ENCODE measurements at regions of chr1 and their contacts with region 1.

Region 1: DNA sequence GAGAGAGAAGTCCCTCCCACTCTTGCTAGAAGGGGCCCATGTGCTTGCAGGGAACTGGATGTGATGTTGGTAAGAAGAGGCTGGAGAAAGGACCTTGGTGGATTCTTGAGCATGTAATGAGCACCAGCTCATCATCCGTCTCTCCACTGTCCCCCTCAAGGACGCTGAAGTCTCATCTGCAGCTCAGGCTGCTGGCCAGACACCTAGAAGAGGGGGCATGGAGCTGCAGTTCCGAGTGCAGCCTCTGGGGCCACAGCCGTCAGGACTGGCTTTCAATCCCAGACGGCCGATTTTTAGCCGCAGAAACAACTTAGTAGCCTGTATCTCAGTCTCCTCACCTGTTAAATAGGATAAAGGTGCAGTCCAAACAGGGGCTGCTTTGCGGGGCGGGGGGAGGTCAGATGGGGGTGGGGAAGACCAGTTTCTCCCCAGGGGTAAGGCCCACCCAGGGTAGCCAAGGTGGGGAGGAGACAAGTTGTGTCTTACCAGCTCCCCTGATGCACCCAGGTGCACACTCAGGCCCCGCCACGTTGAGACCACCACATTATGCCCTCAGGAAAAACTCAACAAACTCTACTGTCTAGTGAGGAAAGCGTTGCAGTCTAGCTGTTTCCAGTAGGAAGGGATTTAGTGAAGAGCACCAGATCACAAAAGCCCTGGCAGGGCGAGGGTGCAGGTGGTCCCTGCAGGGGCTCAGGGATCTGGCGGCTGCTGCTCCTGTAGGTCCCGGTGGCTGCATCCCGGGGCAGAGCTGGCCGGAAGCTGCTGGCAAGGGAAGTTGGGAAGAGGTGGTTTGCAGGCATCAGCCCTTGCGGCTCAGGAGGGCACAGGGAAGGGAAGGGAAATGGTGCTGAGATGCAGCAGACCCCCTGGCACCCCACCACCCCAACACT is 29.5 kb downstream of the LDLRAP1 start:
- DNase-seq: peak in 7 of 9 donors; percentile 42 to 54 (median 49)
- ATAC-seq: peak; percentile 80
- H3K4me3 ChIP-seq: no peak overlapping the region
- H3K4me3 Mint-ChIP-seq: peak overlapping the region in 7 of 10 donors; percentile 7 to 43 (median 29)
- H3K27ac ChIP-seq: peak overlapping the region; percentile 24
- H3K27ac Mint-ChIP-seq: peak overlapping the region in 8 of 9 donors; percentile 71 to 92 (median 79)
- H3K4me1 ChIP-seq: peaks cover 8 to 28% of the 10 kb centered on the region in 2 donors
- H3K4me1 Mint-ChIP-seq: peaks cover 11 to 73% (median 58%) of the 10 kb centered on the region in 7 donors
- H3K27me3 ChIP-seq: no peaks in the 10 kb centered on the region
- H3K27me3 Mint-ChIP-seq: no peaks in the 10 kb centered on the region

Region 2: DNA sequence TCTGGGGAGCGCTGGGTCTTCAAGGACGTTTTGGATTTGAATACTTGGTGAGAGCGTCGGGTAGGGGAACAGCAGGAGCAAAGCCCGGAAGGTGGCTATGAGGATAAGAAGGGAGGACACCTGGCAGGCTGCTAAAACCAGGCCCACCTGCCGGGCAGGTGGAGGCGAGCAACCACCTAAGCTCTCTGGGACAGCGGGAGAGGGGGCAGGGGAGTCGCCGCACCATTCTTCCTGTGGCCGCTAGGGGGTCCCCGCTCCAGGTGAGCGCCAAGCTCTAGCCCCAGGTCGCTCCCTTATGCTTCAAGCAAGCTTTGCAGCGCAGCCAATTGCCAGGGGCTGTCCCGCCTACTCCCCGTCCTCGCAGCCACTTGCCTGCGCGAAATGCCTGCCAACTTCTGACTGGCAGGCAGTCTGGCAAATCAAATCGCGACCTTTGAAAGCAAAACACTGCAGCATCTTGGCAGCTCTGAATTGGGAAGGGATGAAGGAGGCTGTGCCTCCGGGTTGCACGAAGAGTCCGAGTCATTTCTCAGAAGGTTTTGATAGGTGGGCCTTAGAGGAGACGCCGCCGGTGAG is 1157.5 kb before region 1 on chr1 and contains the start of gene NIPAL3:
- CTCF ChIA-PET with region 1: no interaction called
- POLR2A ChIA-PET with region 1: no interaction called
- intact Hi-C with region 1: loop called in 1 of 2 experiments (anchors 10 kb)
- DNase-seq: peak; percentile 81 to 99 (median 97)
- ATAC-seq: peak; percentile 98
- H3K4me3 ChIP-seq: peak within 1 kb of the TSS; percentile 76
- H3K4me3 Mint-ChIP-seq: peak within 1 kb of the TSS; percentile 95 to 100 (median 98)
- H3K27ac ChIP-seq: peak within 1 kb of the TSS; percentile 74
- H3K27ac Mint-ChIP-seq: peak within 1 kb of the TSS; percentile 75 to 99 (median 90)
- H3K4me1 ChIP-seq: peaks cover 23 to 44% of the 10 kb centered on the region in 2 donors
- H3K4me1 Mint-ChIP-seq: peaks cover 51 to 91% (median 75%) of the 10 kb centered on the region in 7 donors
- H3K27me3 ChIP-seq: no peaks in the 10 kb centered on the region
- H3K27me3 Mint-ChIP-seq: no peaks in the 10 kb centered on the region
- total RNA-seq, gene NIPAL3: 35.5 to 65.0 (median 54.5) TPM

Region 3: DNA sequence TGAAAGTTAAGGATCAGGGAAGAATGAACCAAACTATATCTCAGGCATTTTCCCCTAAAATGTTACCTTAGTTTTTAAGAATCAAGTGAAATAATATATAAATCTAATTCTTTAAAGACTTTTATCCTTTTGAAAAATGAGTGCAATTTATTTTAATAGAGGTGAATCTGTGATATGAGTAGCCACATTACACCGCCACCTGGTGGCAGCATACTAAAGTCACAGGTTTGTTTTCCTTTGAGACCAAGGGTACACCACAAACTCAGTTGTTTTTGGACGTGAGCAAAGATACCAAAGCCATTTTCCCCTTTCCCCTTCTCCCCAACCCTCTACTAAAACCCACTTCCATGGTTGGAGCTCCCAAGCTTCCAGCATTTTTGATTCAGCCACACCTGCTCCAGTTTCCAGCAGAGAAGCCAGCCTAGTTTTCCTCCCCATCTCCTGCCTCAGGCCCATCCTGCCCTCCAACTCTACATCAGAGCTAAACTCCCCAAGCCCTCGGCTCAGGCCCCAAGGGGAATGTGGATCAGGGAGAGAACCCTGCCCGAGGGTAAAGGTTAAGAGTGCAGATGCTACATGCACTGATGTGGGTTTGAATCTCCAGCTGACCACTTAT is 52.4 kb before region 1 on chr1:
- CTCF ChIA-PET with region 1: interaction called, 8 read pairs
- POLR2A ChIA-PET with region 1: interaction called, 11 read pairs
- intact Hi-C with region 1: no loop called
- DNase-seq: peak; percentile 40 to 75 (median 66)
- ATAC-seq: peak; percentile 84
- H3K4me3 ChIP-seq: no peak overlapping the region
- H3K4me3 Mint-ChIP-seq: no peak overlapping the region
- H3K27ac ChIP-seq: no peak overlapping the region
- H3K27ac Mint-ChIP-seq: peak overlapping the region in 7 of 9 donors; percentile 72 to 94 (median 85)
- H3K4me1 ChIP-seq: peaks cover 0 to 5% of the 10 kb centered on the region in 2 donors
- H3K4me1 Mint-ChIP-seq: peaks cover 3 to 18% (median 11%) of the 10 kb centered on the region in 7 donors
- H3K27me3 ChIP-seq: no peaks in the 10 kb centered on the region
- H3K27me3 Mint-ChIP-seq: peaks cover 0 to 4% (median 0%) of the 10 kb centered on the region in 5 donors

Region 4: GRCh38 chr1:25543425-25544242 is 29.3 kb before region 1 on chr1 and contains the start of gene LDLRAP1:
- CTCF ChIA-PET with region 1: interaction called, 13 read pairs
- POLR2A ChIA-PET with region 1: interaction called, 442 read pairs
- intact Hi-C with region 1: no loop called
- DNase-seq: peak in 8 of 9 donors; percentile 28 to 81 (median 52)
- ATAC-seq: peak; percentile 97
- H3K4me3 ChIP-seq: peak within 1 kb of the TSS; percentile 60
- H3K4me3 Mint-ChIP-seq: peak within 1 kb of the TSS; percentile 82 to 98 (median 95)
- H3K27ac ChIP-seq: peak within 1 kb of the TSS; percentile 87
- H3K27ac Mint-ChIP-seq: peak within 1 kb of the TSS; percentile 34 to 97 (median 91)
- H3K4me1 ChIP-seq: peaks cover 35 to 38% of the 10 kb centered on the region in 2 donors
- H3K4me1 Mint-ChIP-seq: peaks cover 26 to 48% (median 39%) of the 10 kb centered on the region in 7 donors
- H3K27me3 ChIP-seq: no peaks in the 10 kb centered on the region
- H3K27me3 Mint-ChIP-seq: peaks cover 0 to 15% (median 0%) of the 10 kb centered on the region in 5 donors
- total RNA-seq, gene LDLRAP1: 28.1 to 364 (median 159) TPM

Region 5: DNA sequence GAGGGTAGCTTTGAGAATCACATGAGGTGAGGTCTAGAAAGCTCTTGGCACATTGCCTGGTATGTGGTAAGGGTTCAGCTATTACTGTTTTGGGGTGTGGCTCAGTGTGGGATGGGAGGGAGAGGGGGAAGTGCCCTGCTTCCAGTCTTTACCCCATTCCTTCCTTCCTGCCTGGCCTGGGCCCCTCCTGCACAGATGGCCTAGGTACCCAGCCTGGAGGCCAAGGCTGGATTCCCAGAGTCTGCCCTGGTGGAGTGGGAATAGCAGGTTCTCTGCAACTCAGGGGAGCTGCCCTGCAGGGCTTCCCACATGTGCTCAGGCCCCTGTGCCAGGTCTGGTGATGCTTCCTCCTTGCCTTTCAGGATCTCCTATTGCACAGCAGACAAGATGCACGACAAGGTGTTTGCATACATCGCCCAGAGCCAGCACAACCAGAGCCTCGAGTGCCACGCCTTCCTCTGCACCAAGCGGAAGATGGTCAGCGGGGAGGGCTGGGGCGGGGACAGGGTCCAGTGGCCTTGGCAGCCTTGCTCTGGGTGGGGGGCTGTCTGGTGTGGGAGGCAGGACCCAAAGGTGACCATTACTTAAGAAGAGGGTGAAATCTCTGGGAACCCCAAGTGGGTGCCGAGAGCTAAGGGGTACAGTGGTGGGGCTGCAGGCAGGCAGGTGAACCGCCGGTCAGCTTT is 16.0 kb before region 1 on chr1:
- CTCF ChIA-PET with region 1: interaction called, 7 read pairs
- POLR2A ChIA-PET with region 1: interaction called, 442 read pairs
- intact Hi-C with region 1: no loop called
- DNase-seq: peak in 7 of 9 donors; percentile 50 to 70 (median 60)
- ATAC-seq: peak; percentile 59
- H3K4me3 ChIP-seq: peak overlapping the region; percentile 23
- H3K4me3 Mint-ChIP-seq: peak overlapping the region in 9 of 10 donors; percentile 37 to 99 (median 65)
- H3K27ac ChIP-seq: peak overlapping the region; percentile 83
- H3K27ac Mint-ChIP-seq: peak overlapping the region; percentile 11 to 99 (median 98)
- H3K4me1 ChIP-seq: peaks cover 65 to 100% of the 10 kb centered on the region in 2 donors
- H3K4me1 Mint-ChIP-seq: peaks cover 57 to 100% (median 95%) of the 10 kb centered on the region in 7 donors
- H3K27me3 ChIP-seq: no peaks in the 10 kb centered on the region
- H3K27me3 Mint-ChIP-seq: no peaks in the 10 kb centered on the region